Posterior vena cava (tissue), 2 donors: ENCODE measurements at regions of chr17 and their contacts with region 1.

Region 1: DNA sequence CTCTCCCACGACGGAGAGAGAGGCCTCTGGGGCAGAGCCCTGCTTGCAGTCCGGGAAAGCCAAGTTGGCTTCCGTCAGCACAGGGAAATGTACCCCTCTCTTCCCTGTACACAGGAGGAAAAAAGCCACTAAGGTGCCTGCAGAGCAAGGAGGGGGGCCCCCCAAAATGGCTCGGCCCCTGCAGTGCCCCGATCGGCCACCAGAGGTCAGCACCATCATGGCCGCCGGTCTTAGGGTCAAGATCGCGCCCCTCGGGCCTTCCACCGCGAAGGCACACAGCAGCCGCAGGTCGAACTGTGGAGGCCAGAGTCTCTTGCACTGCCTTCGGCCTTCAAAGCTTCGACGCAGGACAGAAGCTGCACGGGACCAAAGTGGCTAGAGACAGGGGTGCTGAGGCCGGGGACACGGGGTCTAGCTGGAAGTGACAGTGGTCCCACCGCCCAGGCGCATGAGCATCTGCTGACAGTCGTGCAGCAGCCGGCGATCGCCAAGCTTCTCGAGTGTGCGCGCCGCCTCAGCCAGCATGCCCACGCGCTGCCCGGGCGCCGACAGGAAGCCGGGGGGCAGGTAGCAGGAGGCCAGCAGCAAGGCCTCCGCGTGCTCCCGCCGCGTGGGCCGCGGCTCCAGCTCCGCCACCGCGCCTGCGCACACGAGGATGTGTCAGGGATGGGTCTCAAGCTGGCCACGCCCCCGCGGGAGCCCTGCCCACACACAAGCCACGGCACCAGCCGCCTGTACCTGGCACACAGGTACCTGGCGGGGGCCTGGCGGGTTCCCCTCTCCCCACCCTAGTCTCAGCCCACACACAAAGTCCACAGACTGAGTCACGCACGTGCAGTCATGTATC is 24.4 kb downstream of the SREBF1 start:
- DNase-seq: peak; percentile 89

Region 2: GRCh38 chr17:17752089-17752820 is 60.2 kb before region 1 on chr17:
- intact Hi-C with region 1: no loop called
- DNase-seq: peak; percentile 99

Region 3: GRCh38 chr17:17766077-17766743 is 46.2 kb before region 1 on chr17:
- intact Hi-C with region 1: no loop called
- DNase-seq: no peak

Region 4: DNA sequence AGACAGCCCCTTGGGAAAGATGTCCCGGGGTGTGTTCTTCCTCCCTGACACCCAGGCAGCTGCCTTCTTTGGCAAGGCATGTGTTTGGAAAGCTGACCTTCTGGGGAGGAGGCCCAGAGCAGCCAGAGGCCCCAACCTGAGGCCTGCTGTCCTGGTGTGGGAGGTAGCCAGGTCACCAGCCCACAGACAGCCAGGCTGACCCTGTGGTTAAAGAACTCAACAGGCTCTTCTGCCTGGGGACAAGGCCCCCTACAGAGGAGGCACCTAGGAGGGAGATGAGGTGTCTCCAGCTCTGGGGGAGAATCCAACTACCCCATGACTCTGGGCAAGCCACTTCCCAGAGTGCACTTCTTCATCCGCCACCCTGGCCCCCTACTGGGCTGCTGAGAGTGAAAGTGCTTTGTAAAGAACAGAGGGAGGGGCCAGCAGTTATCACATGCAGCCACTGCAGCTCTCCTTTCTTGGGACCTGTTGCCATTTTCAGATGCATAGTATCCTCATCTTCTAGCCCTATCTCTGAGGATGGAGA is 37.5 kb after region 1 on chr17:
- intact Hi-C with region 1: loop called in 1 of 2 experiments (anchors 5 kb)
- DNase-seq: no peak

Region 5: DNA sequence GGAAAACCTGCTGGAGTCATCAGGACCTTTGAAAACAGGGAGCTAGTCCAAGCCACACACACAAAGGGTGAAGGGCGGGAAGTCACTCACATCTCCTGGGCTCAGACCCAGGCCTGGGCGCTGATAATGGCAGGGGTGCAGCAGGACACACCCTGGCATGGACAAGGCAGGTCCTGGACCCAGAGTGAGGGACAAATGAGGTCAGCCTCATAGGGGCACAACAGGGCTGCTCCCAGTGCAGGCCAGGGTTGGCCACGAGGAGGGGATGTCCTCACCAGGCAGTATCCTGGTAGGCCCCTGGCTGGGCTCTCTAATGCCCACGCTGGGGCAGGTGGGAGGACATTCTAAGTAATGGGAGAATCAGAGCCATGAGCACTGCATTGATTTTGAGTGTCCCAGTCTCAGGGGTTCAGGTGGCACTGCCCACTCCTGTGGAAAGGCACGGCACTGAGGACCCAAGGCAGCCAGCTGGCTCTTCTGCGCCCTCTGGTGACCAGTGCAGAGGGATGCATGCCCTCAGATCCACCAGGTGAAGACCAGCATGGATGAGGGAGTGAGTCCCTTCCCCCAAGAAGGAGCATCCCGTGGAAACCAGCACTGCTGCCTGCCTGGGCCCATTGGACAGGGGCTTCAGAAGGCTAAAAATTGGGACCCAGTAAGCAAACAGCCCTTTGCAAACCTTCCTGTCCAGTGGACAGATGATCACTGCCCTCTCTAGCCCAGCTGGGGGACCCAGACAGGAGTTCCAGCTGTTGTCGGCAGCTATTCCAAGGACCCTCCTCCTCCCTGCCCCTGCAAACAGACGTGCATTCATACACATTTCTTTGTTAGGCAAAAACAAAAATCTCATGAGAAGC is 47.7 kb after region 1 on chr17:
- intact Hi-C with region 1: loop called in 1 of 2 experiments (anchors 2 kb)
- DNase-seq: peak; percentile 91

Region 6: DNA sequence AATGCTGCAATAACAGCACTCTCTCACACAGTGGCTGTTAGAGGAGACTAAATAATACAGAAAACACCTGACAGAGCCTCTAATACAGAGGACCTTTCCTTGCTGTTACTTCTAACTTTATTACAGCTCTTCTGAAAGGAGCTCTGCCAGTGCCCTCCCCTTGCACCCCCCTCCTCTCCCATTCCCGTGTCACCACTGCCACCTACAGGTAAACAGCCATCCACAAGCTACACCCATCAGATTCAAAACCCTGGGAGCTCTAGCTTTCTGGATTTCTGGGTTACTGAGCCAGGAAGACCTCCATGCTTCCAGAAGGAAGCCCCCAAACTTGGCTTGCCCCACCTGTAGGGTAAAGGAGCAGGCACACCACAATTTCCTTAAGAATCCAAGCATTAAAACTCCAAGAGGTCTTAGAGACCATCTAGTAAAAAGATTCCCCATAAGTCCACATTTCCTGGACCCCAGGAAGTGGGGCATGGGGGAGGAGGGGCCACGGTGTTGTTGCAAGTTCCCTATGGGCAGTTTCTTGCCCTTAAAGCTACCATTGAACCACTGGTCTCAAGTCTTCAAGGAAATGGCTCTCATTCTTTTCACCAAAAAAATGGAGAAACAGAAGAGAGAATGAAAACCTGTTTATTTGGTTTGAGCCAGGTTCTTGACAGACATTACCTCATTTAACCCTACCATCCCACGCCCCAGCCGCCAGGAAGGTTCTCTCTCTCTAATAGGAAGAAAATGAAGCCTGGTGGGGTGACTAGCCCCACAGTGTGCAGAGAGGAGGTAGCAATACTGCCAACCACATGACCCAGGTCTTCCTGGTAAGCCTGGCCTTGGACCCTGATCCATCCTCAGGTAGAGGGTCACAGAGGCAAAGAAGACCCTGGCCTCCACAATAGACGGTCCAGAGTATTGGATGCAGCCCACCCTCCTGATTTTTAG is 107.0 kb after region 1 on chr17:
- intact Hi-C with region 1: loop called (anchors 10 kb)
- DNase-seq: peak; percentile 83